GM10248 (cell line): ENCODE measurements at regions of chr9 and their contacts with region 1.

Region 1: DNA sequence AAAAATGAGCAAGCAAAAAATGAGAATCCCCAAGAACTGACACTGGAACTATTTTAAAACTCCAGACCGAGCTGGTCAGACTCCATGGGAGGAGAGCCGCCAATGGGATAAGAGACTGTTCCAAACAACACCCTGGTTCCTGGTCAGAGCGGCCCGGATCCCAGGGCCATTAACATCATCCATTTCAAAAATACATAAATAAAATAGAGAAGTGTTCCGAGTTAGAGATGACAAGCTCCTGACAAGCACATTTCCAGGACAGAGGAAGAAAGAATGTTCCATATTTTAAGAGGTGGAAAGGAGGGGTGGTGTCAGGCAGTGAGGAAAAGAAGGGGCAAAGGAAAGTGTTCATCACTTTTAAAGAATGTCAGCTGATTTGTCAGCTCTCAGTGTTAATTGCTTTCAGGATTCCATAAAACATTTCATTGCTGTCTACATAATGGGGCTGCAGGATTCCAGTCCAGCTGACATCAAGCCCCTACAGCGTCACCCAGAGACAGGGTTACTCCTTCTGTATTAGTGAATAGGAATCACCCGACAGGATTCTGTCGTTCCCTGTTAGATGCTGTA is 202.5 kb upstream of the TRIM32 start:
- DNase-seq: no peak
- CTCF ChIP-seq: no peak

Region 2: DNA sequence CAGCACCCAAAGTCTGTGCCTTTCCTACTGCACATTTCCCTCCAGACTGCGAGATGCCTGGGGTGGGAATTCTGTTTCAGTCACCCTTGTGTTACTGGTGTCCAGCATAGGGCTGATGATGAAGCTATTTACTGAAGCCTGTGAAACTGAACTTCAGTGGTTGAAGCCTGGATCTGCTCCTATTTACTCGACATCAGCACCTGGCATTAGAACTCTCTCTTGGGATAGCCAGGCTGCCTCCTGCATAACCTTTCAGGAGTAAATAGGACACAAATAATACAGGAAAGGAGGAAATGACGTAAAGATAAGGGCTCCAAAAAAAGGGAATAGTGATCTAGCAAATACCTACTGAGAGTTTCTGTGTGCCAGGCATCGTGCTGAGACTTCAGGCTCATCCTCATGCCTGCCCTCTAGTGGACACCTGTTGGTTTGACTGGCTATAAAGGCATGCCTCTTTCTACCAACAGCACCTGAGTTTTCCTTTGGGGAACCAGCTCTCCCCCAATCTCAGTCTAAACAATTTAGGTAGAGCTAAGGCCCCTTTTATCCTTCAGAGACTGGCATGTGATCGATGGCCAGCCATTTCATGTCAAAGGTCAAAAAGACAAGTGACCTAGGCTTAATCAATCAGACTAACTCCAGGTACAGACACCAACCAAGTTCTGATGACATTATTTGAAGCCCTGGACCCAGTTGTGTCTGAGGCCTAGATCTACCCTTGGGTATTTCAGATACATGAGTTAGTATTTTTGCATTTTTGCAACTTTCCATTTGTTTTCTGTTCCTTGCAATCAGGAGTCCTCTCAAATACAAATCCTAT is 10.4 kb after region 1 on chr9:
- CTCF ChIA-PET with region 1: interaction called, 24 read pairs
- POLR2A ChIA-PET with region 1: no interaction called
- DNase-seq: peak; percentile 22
- CTCF ChIP-seq: peak; percentile 59